ENCODE measurements at regions of chr11 and their contacts with region 1.

Region 1: DNA sequence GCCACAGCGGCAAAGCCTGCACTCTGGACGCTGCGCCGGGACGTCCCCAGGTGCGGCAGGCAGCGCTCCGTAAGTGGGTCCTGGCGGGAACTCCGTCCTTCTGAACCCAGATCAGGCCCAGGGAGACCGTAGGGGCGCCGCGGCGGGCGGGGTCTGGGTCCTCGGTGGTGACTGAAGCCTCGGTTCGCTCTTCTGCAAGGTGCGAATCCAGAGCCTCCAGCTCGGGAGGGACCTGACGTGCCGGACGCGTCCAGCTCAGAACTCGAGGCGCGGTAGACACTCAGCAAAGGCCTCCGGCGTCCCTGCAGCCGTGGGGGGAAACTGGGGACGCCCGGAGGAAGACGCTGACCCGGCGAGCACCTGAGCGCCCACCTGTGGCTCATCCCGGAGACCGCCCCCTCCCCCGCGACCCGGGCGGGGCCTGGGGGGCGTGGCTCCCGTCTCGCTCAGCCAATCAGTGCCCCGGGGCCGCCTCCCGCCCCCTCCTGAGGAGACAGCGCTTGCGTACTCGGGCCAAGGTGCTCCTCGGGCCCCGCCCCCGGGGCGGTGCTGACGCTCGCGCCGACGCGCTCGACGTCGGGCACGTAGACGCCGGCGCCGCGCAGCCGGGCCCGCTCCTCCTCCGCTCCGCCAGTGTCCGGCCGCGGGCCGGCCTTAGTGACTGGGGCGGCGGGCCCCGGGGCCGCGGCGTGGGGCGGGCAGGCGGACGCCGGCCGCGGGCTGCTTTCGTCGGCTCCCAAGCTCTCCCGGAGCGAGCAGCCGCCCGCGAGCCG is at the start of gene PPFIA1:
- DNase-seq: peak; percentile 98
- ATAC-seq: peak; percentile 99
- total RNA-seq, gene PPFIA1: 43.8 TPM

Region 2: GRCh38 chr11:69949327-69949726 is 321.0 kb before region 1 on chr11:
- intact Hi-C with region 1: no loop called
- DNase-seq: no peak
- ATAC-seq: no peak

Region 3: DNA sequence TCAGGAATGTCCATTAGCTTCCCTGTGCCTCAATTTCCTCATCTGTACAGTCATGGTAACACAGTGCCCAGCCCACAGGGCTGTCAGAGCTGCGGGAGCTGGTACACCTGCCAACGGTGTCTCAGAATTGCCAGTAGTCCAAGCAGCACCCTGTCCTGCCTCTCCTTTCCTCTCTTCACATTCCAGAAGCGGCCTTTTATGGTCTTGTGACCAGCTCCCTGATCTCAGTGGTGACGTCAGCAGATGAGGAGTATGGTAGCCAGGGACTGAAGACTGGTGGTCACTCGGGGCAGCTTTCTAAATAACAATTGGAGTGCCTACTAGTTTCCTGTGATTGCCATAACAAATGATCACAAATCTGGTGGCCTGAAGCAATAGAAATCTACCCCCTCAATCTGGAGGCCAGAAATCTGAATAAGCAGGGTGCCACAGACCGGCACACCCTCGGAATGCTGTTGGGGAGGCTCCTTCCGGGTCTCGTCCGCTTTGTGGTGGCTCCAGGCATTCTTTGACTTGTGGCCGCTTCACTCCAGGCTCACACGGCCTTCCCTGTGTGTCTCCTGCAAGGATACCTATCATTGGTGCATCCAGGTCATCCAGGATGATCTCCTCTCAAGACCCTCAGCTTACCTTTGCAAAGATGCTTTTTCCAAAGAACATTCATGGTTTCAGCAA is 65.1 kb before region 1 on chr11:
- intact Hi-C with region 1: loop called (anchors 5 kb)
- DNase-seq: peak; percentile 60
- ATAC-seq: no peak

Region 4: GRCh38 chr11:70397983-70398833 is 127.9 kb after region 1 on chr11 and contains the start of gene CTTN:
- intact Hi-C with region 1: loop called (anchors 5 kb)
- DNase-seq: peak; percentile 90
- ATAC-seq: peak; percentile 90
- total RNA-seq, gene CTTN: 166 TPM